ENCODE measurements at regions of chr10 and their contacts with region 1.

Region 1: DNA sequence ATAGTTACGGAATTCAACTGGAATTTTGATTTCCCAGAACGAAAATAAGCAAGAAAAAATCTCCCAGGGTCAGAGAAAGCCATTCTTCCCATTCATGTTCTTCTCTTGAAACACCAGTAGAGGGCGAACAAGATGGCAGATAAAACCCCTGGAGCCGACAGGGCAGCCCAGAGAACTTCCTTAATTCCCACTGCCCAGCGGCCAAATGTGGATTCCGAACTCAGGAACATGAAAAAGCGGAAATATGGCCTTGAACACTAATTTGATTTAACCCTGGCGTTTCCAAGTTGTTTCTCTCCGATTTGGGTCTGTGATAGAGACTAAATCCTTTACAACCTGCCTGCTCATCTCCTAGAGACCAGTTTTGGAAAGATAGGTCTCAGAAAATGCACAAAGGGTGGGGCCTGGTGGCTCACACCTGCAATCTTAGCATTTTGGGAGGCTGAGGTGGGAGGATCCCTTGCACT is 100.7 kb upstream of the WAC start:
- DNase-seq: peak; percentile 32 to 80 (median 67)
- H3K4me3 ChIP-seq: no peak overlapping the region
- H3K27ac ChIP-seq: no peak overlapping the region
- H3K4me1 ChIP-seq: no peaks in the 10 kb centered on the region
- H3K27me3 ChIP-seq: no peaks in the 10 kb centered on the region
- CTCF ChIP-seq: peak; percentile 52 to 75 (median 70)
- POLR2A ChIP-seq: no peak

Region 2: DNA sequence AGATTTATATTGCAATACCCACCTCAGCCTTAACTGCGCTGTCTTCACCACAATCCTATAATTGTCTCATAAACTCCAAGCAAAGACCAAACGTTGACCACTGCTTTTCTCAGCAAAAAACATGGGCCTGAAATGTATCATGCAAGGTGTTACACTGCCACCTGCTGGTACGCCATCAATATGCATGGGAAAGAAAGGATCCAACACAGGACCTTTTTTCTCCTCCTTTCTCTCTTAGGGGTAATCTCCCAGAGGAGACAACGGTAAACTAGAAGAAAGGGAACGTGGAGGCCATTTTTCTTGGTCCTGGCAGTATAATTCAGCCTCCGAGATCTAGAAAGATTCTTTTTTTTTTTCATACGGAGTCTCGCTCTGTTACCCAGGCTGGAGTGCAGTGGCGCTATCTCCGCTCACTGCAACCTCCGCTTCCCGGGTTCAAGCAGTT is 50.3 kb before region 1 on chr10:
- intact Hi-C with region 1: no loop called
- DNase-seq: peak; percentile 66 to 96 (median 89)
- H3K4me3 ChIP-seq: no peak overlapping the region
- H3K27ac ChIP-seq: no peak overlapping the region
- H3K4me1 ChIP-seq: no peaks in the 10 kb centered on the region
- H3K27me3 ChIP-seq: peaks cover 9% of the 10 kb centered on the region
- CTCF ChIP-seq: peak; percentile 94 to 99 (median 98)
- POLR2A ChIP-seq: no peak

Region 3: DNA sequence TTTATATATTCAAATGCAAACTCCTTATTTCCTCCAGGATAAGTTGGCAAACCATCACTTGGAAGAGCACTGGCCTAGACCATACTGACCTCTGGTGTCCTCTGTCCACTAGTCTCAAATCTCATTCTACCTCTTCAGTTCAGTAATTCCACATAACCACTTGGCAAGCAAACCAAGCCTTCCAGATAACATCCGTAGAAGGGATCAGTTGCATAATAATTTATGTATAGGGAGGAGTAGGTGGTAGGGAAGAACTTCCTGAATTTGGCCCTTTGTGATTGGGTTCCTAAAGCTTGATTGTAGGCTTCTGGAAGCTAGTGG is 155.7 kb after region 1 on chr10:
- intact Hi-C with region 1: loop called in 1 of 2 experiments (anchors 10 kb)
- DNase-seq: peak in 3 of 7 donors; percentile 27 to 41 (median 27)
- H3K4me3 ChIP-seq: no peak overlapping the region
- H3K27ac ChIP-seq: peak overlapping the region in 3 of 5 donors; percentile 19 to 24 (median 21)
- H3K4me1 ChIP-seq: peaks cover 26 to 34% of the 10 kb centered on the region in 2 donors
- H3K27me3 ChIP-seq: no peaks in the 10 kb centered on the region
- CTCF ChIP-seq: peak; percentile 5 to 40 (median 28)
- POLR2A ChIP-seq: no peak

Region 4: GRCh38 chr10:28628184-28628893 is 196.1 kb after region 1 on chr10:
- intact Hi-C with region 1: loop called in 1 of 2 experiments (anchors 10 kb)
- DNase-seq: peak; percentile 76 to 91 (median 85)
- H3K4me3 ChIP-seq: no peak overlapping the region
- H3K27ac ChIP-seq: no peak overlapping the region
- H3K4me1 ChIP-seq: no peaks in the 10 kb centered on the region
- H3K27me3 ChIP-seq: no peaks in the 10 kb centered on the region
- CTCF ChIP-seq: peak; percentile 76 to 89 (median 86)
- POLR2A ChIP-seq: no peak

Region 5: DNA sequence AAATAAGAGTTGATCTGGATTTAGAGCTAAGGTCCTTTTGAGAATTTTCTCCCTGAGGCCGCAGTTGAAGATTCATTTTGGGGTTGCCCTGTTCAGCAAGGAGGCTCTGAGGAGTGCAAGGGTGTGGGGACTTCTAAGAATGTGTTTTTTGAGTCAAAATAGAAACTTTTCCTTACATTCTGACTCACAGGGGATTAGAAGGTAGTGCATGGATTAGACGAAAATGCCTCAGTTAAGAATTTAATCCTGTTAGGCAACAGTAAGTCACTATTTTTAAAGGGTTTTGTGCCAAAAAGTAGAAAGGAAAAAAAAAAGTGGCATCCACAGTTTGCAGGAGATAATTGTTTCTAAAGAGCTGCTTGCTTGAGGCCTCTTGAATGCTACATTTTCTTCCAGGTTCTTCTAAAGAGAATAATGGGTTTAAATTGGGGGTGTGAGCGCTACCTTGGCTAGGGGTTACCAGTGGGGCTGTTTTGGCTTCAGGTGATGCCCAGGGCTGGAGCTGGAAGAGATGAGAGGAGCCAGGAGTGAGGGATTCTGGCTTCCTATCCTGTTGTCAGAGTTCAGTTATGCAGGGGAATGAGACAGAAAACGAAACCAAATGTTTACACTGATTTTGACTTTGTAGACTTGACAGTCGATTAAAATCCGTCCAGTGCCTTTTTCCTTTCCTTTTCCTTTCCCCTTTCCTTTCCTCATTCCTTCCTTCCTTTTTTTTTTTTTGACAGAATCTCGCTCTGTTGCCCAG is 298.0 kb after region 1 on chr10:
- intact Hi-C with region 1: no loop called
- DNase-seq: no peak
- H3K4me3 ChIP-seq: no peak overlapping the region
- H3K27ac ChIP-seq: peak overlapping the region in 1 of 5 donors; percentile 24
- H3K4me1 ChIP-seq: no peaks in the 10 kb centered on the region
- H3K27me3 ChIP-seq: no peaks in the 10 kb centered on the region
- CTCF ChIP-seq: no peak
- POLR2A ChIP-seq: no peak

Region 6: DNA sequence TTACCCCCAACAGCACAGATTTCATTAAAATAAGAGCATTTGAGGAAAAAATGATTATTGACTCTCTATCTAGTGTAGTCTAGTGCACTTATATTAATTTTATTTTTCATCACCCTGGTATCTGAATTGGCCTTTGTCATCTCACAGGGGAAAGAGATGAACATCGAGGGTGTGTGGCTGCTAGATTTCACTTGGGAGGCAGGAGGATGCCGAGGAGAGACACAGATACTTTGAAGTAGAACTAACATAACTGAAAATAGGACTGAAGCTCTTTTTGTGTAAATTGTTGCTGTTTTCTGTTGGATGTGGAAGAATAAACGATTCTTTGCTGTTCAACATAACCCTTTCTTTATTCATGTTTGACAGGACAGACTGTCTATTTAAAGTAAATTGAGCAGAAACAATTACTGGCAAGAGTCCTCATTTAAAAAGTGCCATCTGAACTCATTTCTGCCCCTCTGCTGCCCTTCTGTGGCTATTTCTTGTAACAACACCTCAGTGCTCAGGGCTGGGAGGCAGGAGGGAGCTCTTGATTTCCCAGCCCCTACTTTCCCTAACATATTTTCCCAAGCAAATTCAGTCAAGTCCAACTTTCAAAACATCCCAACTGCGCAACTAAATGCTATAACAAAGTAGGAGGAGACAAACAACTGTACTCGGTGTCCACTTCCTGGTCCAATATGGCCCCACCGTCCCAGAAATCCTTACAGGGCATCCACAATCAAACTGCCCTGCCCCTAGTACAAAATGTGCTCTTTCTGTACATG is 872.2 kb after region 1 on chr10:
- intact Hi-C with region 1: loop called in 1 of 2 experiments (anchors 10 kb)
- DNase-seq: peak; percentile 44 to 84 (median 57)
- H3K4me3 ChIP-seq: no peak overlapping the region
- H3K27ac ChIP-seq: no peak overlapping the region
- H3K4me1 ChIP-seq: no peaks in the 10 kb centered on the region
- H3K27me3 ChIP-seq: no peaks in the 10 kb centered on the region
- CTCF ChIP-seq: peak; percentile 64 to 86 (median 82)
- POLR2A ChIP-seq: no peak

Measured in adrenal gland (tissue), 19 donors.